ENCODE measurements at regions of chr4 and their contacts with region 1.

Region 1: GRCh38 chr4:100093091-100093866 is 97.0 kb downstream of the DDIT4L start:
- DNase-seq: peak; percentile 79
- H3K4me3 Mint-ChIP-seq: no peak overlapping the region
- H3K27ac Mint-ChIP-seq: peak overlapping the region; percentile 84
- H3K4me1 Mint-ChIP-seq: peaks cover 41% of the 10 kb centered on the region
- H3K27me3 Mint-ChIP-seq: no peaks in the 10 kb centered on the region

Region 2: GRCh38 chr4:99949034-99949998 is 144.0 kb before region 1 on chr4:
- intact Hi-C with region 1: loop called (anchors 5 kb)
- DNase-seq: peak; percentile 87
- H3K4me3 Mint-ChIP-seq: no peak overlapping the region
- H3K27ac Mint-ChIP-seq: no peak overlapping the region
- H3K4me1 Mint-ChIP-seq: peaks cover 31% of the 10 kb centered on the region
- H3K27me3 Mint-ChIP-seq: no peaks in the 10 kb centered on the region

Region 3: DNA sequence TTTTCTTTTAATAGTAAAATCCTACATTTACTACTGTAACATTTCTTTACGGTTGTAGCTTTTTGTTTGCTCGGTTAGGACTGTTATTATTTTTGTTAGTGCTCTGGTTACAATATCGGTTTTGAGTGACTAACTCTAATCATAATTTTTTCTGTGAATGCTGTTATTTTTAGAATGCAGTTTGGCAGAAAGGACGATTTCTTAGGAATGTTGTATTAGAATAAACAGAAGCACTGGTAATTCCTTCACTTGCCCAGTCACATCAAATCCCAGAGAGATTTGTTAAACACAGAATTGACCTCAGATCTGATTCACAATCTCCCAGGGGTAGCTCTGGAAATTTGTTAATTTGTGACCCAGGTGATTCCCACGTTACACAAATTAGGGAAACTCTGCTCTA is 75.2 kb after region 1 on chr4:
- intact Hi-C with region 1: loop called (anchors 5 kb)
- DNase-seq: no peak
- H3K4me3 Mint-ChIP-seq: no peak overlapping the region
- H3K27ac Mint-ChIP-seq: no peak overlapping the region
- H3K4me1 Mint-ChIP-seq: peaks cover 44% of the 10 kb centered on the region
- H3K27me3 Mint-ChIP-seq: no peaks in the 10 kb centered on the region

Region 4: GRCh38 chr4:100569196-100569595 is 475.9 kb after region 1 on chr4:
- intact Hi-C with region 1: loop called (anchors 10 kb)
- DNase-seq: no peak
- H3K4me3 Mint-ChIP-seq: no peak overlapping the region
- H3K27ac Mint-ChIP-seq: no peak overlapping the region
- H3K4me1 Mint-ChIP-seq: peaks cover 19% of the 10 kb centered on the region
- H3K27me3 Mint-ChIP-seq: peaks cover 9% of the 10 kb centered on the region

Region 5: GRCh38 chr4:101020956-101021355 is 927.7 kb after region 1 on chr4:
- intact Hi-C with region 1: loop called (anchors 5 kb)
- DNase-seq: peak; percentile 10
- H3K4me3 Mint-ChIP-seq: peak overlapping the region; percentile 57
- H3K27ac Mint-ChIP-seq: peak overlapping the region; percentile 74
- H3K4me1 Mint-ChIP-seq: peaks cover 54% of the 10 kb centered on the region
- H3K27me3 Mint-ChIP-seq: no peaks in the 10 kb centered on the region

Region 6: GRCh38 chr4:101205916-101206315 is 1112.6 kb after region 1 on chr4:
- intact Hi-C with region 1: loop called (anchors 2 kb)
- DNase-seq: peak; percentile 46
- H3K4me3 Mint-ChIP-seq: no peak overlapping the region
- H3K27ac Mint-ChIP-seq: peak overlapping the region; percentile 42
- H3K4me1 Mint-ChIP-seq: peaks cover 30% of the 10 kb centered on the region
- H3K27me3 Mint-ChIP-seq: peaks cover 2% of the 10 kb centered on the region

Region 7: GRCh38 chr4:101730291-101731117 is 1637.2 kb after region 1 on chr4:
- intact Hi-C with region 1: loop called (anchors 10 kb)
- DNase-seq: peak; percentile 16
- H3K4me3 Mint-ChIP-seq: no peak overlapping the region
- H3K27ac Mint-ChIP-seq: no peak overlapping the region
- H3K4me1 Mint-ChIP-seq: no peaks in the 10 kb centered on the region
- H3K27me3 Mint-ChIP-seq: peaks cover 6% of the 10 kb centered on the region